ENCODE measurements at regions of chr6 and their contacts with region 1.

Region 1: DNA sequence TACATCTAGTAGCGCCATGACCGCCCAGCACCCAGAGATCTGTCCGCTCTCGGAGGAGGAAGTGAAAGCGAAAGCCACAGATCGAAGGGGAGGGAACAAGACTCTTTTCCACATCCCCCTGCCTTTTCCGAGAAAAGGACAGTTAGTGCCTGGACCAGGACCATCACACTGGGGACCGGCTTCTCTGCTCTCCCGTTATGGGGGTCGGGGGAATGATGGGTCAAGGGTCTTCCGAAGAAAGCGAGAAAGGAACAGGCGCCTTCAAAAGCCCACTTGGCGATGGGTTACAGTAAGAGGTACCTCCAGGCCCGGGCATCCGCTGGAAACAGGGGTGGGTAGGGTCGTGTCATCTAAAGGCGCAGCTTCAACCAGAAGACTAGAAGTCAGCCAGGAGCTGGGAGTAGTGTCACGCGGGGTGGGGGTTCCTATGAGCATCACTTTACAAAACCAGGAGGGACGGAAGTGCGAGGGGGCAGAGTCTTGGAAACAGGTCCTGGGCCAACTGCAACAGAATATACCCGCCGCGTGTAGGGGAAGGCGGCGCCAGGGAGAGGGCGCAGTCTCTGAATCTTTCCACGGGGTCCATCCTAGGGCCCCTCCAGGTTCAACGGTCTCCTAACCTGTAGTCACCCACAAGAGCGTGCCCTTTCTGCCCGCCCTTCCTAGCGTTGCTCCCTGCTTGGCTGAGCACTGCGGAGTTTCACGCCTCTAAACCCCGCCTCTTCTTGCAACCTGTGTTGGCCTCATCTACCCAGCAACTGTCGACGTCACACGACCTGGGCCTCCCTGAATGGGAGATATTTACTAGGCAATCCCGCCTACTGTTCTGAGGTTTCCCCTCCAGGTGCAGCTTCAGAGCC is at the start of gene PSMB8:
- DNase-seq: peak; percentile 100
- ATAC-seq: peak; percentile 75
- H3K4me3 Mint-ChIP-seq: peak within 1 kb of the TSS; percentile 97
- H3K27ac Mint-ChIP-seq: peak within 1 kb of the TSS; percentile 99
- H3K4me1 Mint-ChIP-seq: peaks cover 63% of the 10 kb centered on the region
- H3K27me3 Mint-ChIP-seq: no peaks in the 10 kb centered on the region
- CTCF ChIP-seq: no peak
- total RNA-seq, gene PSMB8: 370 to 371 TPM

Region 2: GRCh38 chr6:32713241-32713640 is 131.0 kb before region 1 on chr6:
- CTCF ChIA-PET with region 1: no interaction called
- POLR2A ChIA-PET with region 1: no interaction called
- intact Hi-C with region 1: no loop called
- DNase-seq: no peak
- ATAC-seq: no peak
- H3K4me3 Mint-ChIP-seq: no peak overlapping the region
- H3K27ac Mint-ChIP-seq: no peak overlapping the region
- H3K4me1 Mint-ChIP-seq: no peaks in the 10 kb centered on the region
- H3K27me3 Mint-ChIP-seq: peaks cover 2% of the 10 kb centered on the region
- CTCF ChIP-seq: no peak

Region 3: GRCh38 chr6:32825966-32826365 is 18.2 kb before region 1 on chr6:
- CTCF ChIA-PET with region 1: interaction called, 52 read pairs
- POLR2A ChIA-PET with region 1: interaction called, 47 read pairs
- intact Hi-C with region 1: no loop called
- DNase-seq: no peak
- ATAC-seq: no peak
- H3K4me3 Mint-ChIP-seq: no peak overlapping the region
- H3K27ac Mint-ChIP-seq: no peak overlapping the region
- H3K4me1 Mint-ChIP-seq: peaks cover 37% of the 10 kb centered on the region
- H3K27me3 Mint-ChIP-seq: no peaks in the 10 kb centered on the region
- CTCF ChIP-seq: peak; percentile 16

Region 4: DNA sequence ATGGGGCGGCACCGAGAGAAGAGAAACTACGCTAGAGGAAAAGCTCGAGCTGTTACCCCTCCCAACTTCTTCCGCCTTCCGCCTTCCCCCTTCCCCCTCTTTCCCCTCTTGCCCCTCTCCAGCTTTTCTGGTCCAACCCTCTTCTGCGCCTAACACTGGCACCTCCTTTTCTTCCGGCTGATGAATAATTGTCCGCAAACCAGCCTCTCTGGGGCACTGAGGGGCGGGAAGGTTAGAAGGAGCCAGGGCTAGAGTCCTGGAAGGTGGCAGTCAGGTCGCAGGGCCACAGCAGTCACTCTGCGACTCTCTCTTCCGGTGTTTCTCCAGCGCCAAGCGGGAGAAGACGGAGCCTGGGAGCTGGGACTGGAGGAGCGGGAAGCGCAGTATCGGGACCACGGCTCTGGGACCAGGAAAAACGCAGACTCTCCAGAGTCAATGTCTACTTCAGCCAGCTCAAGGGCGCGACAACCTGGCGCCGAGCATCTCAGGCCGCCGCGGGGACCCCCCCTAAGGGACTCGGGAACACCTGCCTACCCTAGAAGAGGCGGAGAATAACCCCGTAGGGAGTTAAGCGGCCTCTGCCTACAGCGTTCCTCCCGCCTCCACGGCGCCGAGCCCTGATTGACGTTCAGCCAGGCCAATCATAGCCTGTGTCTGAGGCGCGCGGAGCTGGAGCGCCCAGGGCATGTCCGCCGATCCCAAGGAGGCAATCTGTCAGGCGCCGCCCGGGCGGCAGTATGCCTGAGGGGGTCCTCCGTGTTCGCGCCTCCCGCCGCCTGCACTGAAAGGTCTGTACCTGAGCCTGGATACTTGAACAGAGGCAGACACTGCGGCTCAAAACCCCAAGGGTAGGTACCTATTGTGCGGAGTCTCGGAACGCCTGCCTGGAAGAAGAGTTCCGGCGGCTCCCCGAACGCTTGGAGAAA is 50.1 kb after region 1 on chr6:
- CTCF ChIA-PET with region 1: interaction called, 6 read pairs
- POLR2A ChIA-PET with region 1: interaction called, 14 read pairs
- intact Hi-C with region 1: no loop called
- DNase-seq: peak; percentile 95
- ATAC-seq: peak; percentile 99
- H3K4me3 Mint-ChIP-seq: peak overlapping the region; percentile 96
- H3K27ac Mint-ChIP-seq: peak overlapping the region; percentile 96
- H3K4me1 Mint-ChIP-seq: peaks cover 35% of the 10 kb centered on the region
- H3K27me3 Mint-ChIP-seq: no peaks in the 10 kb centered on the region
- CTCF ChIP-seq: no peak